Activated T-helper 2 cell treated with anti-CD3 and anti-CD28 coated beads, Interferon-gamma antibody, Interleukin-2, Interleukin-4, amounts not matched to agents 10 μg/mL and 5 μg/mL and 100 μg/mL, durations not matched to agents 14 hours and 24 hours and 36 hours (primary cell): ENCODE measurements at regions of chr18 and their contacts with region 1.

Region 1: DNA sequence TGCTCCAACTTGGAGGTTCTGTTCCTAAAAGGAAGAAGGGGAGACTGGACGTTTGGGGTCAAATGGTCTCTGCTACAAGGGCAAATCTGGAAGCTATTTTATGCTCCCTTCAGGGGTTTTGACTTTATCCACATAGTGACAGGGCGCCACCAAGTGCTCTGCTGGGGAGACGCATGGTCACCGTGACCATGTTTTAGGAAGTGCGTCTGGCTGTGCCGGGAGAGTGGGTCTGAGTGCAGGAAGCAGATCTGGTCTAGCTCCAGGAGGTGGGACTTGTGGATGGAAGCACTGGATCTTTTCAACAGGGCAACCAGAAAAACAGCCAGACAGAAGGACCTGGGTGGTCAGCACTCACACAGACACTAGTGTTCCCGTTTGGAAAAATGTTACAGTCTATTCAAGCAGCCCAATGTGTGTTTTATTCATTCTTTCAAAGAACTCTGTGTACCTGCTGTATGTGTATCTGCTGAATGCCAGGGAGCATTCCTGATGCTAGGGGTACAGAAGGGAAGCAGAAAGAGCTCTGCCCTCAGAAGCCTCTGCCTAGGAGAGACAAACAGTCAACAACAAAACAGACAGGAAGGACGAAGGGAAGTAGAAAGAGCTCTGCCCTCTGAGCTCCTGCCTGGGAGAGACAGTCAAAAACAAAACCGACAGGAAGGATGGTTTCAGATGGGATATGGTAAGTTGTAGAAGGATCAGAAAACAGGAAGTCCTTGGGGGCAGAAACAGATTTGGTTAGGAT is 14.3 kb downstream of the IMPA2 start:
- DNase-seq: peak; percentile 32
- H3K4me3 Mint-ChIP-seq: no peak overlapping the region
- H3K27ac Mint-ChIP-seq: peak overlapping the region; percentile 18
- H3K4me1 Mint-ChIP-seq: peaks cover 11% of the 10 kb centered on the region
- H3K27me3 Mint-ChIP-seq: no peaks in the 10 kb centered on the region

Region 2: GRCh38 chr18:11488175-11488574 is 507.4 kb before region 1 on chr18:
- intact Hi-C with region 1: no loop called
- DNase-seq: no peak
- H3K4me3 Mint-ChIP-seq: no peak overlapping the region
- H3K27ac Mint-ChIP-seq: no peak overlapping the region
- H3K4me1 Mint-ChIP-seq: no peaks in the 10 kb centered on the region
- H3K27me3 Mint-ChIP-seq: no peaks in the 10 kb centered on the region

Region 3: DNA sequence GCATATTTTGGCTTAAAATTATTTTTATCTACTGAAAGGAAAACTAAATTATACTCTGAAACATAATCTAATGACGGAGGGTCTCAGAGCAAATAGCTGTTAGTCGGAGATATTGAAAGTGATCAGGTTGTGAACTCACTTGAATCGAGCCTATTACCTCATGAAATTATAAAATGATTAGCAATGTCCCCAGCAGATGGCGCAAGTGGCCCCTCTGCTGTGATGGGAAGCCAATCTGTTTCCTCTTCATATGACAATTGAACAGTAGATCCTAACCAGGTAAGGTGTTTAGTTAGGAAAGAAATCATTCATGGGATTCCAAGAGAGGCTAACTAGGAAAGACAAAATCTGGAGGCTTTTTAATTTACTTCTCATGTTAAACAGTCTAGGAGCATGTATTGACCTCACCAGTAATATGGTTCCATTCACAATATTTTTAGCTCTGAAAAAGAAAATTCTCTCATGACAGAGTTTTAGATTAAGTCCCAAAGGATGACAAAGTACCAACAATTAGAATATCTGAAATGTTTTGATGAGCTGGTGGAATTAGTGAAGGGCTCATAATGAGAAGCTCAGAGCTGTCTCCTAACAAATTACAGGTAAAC is 57.6 kb before region 1 on chr18:
- intact Hi-C with region 1: loop called (anchors 1 kb)
- DNase-seq: peak; percentile 53
- H3K4me3 Mint-ChIP-seq: no peak overlapping the region
- H3K27ac Mint-ChIP-seq: no peak overlapping the region
- H3K4me1 Mint-ChIP-seq: no peaks in the 10 kb centered on the region
- H3K27me3 Mint-ChIP-seq: no peaks in the 10 kb centered on the region

Region 4: GRCh38 chr18:12038639-12039417 is 43.2 kb after region 1 on chr18:
- intact Hi-C with region 1: loop called (anchors 5 kb)
- DNase-seq: peak; percentile 68
- H3K4me3 Mint-ChIP-seq: peak overlapping the region; percentile 69
- H3K27ac Mint-ChIP-seq: no peak overlapping the region
- H3K4me1 Mint-ChIP-seq: peaks cover 27% of the 10 kb centered on the region
- H3K27me3 Mint-ChIP-seq: peaks cover 4% of the 10 kb centered on the region

Region 5: DNA sequence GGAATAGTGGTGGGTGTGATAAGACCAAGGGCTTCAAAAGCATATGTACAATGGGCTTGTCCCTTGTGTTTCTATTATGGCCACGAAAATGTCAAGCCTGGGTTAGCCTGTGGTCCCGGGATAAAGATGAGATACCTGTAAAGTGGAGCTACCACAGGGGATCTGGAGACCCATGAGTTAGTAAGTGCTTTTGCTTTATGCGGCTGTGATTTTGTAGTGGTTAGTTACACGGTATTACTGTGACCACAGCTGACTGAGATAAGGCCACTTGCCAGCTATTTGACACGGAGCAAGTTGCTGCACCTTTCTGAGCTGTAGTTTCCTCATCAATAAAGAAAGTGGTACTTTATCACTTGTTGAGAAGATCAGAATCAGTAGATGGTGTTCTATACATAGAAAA is 511.4 kb after region 1 on chr18:
- intact Hi-C with region 1: no loop called
- DNase-seq: no peak
- H3K4me3 Mint-ChIP-seq: no peak overlapping the region
- H3K27ac Mint-ChIP-seq: no peak overlapping the region
- H3K4me1 Mint-ChIP-seq: peaks cover 3% of the 10 kb centered on the region
- H3K27me3 Mint-ChIP-seq: no peaks in the 10 kb centered on the region